Endothelial cell of umbilical vein (primary cell): ENCODE measurements at regions of chr10 and their contacts with region 1.

Region 1: GRCh38 chr10:101095542-101096213 is 33.9 kb downstream of the KAZALD1 start:
- DNase-seq: peak; percentile 63
- H3K4me3 ChIP-seq: no peak overlapping the region
- H3K27ac ChIP-seq: no peak overlapping the region
- H3K4me1 ChIP-seq: no peaks in the 10 kb centered on the region
- H3K27me3 ChIP-seq: peaks cover 7% of the 10 kb centered on the region in 2 experiments
- CTCF ChIP-seq: peak; percentile 81 to 87
- POLR2A ChIP-seq: no peak

Region 2: DNA sequence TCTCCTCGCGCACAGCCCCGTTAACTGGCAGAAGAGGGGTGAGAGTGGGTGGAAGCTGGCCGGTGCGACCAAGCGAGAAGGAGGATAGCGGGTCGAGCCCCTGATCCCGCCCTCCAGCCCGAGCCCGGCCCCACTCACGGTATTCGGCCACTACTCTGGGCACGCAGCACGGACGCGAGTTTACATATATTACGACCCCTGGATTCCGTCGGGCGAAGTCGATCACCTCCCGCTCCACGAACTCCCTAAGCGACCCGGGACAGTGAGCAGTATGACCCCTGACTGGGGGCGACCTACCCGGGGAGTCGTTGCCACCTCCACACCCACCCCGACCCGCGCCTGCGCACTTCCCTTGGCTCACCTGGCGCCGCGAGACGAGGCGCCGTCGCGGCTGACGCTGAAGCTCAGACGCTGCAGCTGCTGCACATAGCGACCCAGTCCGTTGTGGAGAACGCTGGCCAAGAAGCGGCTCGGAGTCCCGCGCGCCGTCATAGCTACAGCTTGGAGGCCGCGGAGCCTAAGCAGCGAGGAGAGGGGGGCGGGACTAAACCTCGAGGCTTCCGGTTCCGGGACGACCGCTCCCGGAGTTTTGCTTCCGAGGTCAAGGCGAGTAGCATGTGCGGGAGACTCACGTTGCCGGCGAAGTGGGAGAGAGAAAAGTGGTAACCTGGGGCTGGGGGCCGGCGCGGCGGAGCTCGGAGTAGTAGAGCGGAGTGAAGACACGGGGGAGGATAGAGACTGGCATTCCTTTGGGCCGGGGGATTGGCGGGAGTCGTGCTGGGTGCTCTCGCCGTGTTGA is 108.5 kb before region 1 on chr10 and contains the starts of genes MRPL43 and TWNK:
- CTCF ChIA-PET with region 1: no interaction called
- POLR2A ChIA-PET with region 1: no interaction called
- dilution Hi-C with region 1: no loop called
- intact Hi-C with region 1: no loop called
- DNase-seq: peak; percentile 84
- H3K4me3 ChIP-seq: peak within 1 kb of the TSS; percentile 73 to 98 (median 81)
- H3K27ac ChIP-seq: no peak within 1 kb of the TSS
- H3K4me1 ChIP-seq: peaks cover 12% of the 10 kb centered on the region
- H3K27me3 ChIP-seq: no peaks in the 10 kb centered on the region
- CTCF ChIP-seq: no peak
- POLR2A ChIP-seq: no peak
- total RNA-seq, gene MRPL43: 75.0 and 77.3 TPM in 2 replicates
- total RNA-seq, gene TWNK: 10.9 and 12.3 TPM in 2 replicates

Region 3: DNA sequence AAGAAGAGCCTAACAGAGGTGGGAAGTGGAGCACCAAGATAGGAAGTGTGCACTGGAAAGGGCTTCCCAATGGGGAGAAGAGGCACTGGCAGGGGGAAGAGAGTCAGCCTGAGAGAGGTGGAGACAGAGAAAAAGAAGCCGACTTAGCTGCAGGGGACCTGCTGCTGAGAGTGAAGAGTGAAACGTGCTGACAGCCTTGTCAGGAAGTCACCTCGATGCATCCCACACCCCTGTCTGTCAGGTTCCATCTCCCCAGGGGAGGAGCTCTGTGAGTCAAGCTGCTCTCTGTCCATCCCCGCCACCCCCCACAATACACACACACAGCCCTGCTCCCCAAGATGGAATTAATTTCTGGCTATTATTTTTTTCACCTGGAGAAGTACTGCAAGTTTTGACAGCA is 19.9 kb before region 1 on chr10:
- CTCF ChIA-PET with region 1: interaction called, 11 read pairs
- POLR2A ChIA-PET with region 1: no interaction called
- dilution Hi-C with region 1: no loop called
- intact Hi-C with region 1: no loop called
- DNase-seq: no peak
- H3K4me3 ChIP-seq: no peak overlapping the region
- H3K27ac ChIP-seq: no peak overlapping the region
- H3K4me1 ChIP-seq: no peaks in the 10 kb centered on the region
- H3K27me3 ChIP-seq: peaks cover 15 to 29% of the 10 kb centered on the region in 2 experiments
- CTCF ChIP-seq: no peak
- POLR2A ChIP-seq: no peak

Region 4: GRCh38 chr10:101120884-101121653 is 25.4 kb after region 1 on chr10:
- CTCF ChIA-PET with region 1: interaction called, 16 read pairs
- POLR2A ChIA-PET with region 1: no interaction called
- dilution Hi-C with region 1: no loop called
- intact Hi-C with region 1: no loop called
- DNase-seq: no peak
- H3K4me3 ChIP-seq: peak overlapping the region in 2 of 3 experiments; percentile 32 to 40
- H3K27ac ChIP-seq: no peak overlapping the region
- H3K4me1 ChIP-seq: no peaks in the 10 kb centered on the region
- H3K27me3 ChIP-seq: peaks cover 69 to 82% of the 10 kb centered on the region in 2 experiments
- CTCF ChIP-seq: no peak
- POLR2A ChIP-seq: no peak